Posterior vena cava (tissue), 2 donors: ENCODE measurements at regions of chr1 and their contacts with region 1.

Region 1: DNA sequence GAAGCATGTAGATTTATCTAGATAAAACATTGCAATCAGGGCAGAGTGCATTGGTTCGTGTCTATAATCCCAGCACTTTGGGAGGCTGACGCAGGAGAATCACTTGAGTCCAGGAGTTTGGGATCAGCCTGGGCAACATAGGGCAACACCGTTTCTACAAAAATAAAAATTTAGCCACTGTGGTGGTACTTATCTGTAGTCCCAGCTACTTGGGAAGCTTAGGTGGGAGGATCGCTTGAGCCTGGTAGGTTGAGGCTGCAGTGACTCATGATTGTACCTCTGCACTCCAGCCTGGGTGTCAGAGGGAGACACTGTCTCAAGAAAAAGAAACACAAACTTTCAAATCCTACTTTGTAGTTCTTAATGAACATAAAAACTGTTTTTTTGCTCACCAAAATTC is 64.2 kb upstream of the RCC1 start:
- DNase-seq: no peak

Region 2: GRCh38 chr1:27906759-27907158 is 534.9 kb before region 1 on chr1:
- intact Hi-C with region 1: loop called in 1 of 2 experiments (anchors 5 kb)
- DNase-seq: no peak